ENCODE measurements at regions of chr2 and their contacts with region 1.

Region 1: DNA sequence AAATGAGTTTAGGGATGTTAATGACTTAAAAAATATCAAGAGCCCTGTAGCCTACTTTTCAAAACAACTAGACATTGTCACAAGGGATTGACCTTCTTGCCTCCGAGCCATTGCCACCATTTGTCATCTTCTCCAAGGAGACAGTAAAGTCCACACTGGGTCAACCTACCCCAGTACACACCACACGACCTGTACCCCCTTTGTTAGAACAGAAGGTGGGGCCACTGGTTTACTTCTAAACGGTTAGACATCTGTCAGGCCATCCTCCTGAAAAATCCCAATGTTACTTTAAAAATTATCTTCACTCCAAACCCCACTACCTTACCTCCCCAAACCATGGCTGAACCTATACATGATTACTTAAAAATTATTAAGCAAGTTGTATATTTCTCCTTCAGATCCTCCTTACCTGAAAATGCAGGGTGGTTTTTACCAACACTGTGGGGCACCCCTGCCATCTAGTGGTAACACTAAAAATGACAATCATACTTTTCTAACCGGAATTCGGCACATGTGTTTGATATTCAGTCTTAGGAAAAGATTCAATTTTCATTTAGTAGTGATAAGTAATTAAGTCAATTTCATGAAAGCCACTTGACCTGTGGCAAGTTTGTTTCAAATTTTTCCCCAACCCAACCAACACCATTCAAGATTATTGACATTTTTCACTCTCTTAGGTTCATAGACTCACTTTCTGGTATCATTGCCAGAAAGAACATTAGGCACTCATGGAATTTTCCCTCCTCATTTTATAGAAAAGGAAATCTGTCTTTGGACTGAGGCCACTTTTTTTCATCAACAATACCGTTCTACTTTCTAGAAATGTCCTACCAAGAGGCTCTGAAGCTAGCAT is 265.3 kb upstream of the PKDCC start:
- DNase-seq: peak; percentile 20
- CTCF ChIP-seq: peak; percentile 68

Region 2: DNA sequence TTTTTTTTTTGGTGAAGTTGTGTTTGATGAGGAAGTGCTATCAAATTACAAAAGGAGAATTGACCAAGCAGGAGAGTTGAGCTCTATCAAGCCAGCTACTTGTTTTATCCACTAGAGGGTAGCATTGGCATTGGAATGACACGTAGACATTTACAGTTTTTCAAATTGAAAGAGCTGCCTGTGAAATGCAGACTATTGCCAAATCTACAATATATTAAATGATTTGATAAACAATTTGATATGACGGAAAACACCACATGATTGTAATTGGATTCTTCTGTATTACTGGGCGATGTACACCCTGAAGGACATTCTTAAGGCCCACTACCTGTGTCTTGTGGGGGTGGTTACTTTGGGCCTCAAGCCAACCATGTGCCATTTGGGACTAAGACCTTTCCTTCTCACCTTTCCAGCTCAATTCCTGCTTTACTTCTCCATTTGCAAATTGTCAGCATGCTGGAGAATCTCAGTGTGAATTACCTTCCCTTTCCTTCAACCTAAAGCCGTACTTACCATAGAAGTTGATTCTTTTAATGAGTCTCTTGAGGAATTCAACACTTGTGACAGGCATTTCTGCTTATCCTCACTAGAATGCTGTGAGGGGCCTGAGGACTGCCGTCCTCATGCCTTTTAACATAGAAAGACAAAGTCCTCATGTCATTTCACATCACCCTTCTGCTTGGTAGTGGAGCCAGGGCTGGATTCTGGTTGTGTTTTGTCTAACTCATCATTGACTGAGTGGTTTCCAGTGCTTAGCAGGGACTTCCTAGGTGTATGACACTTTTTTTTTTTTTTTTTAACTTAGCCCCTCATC is 1868.7 kb before region 1 on chr2:
- in situ Hi-C with region 1: loop called (anchors 25 kb)
- DNase-seq: peak; percentile 46
- CTCF ChIP-seq: peak; percentile 87

Region 3: DNA sequence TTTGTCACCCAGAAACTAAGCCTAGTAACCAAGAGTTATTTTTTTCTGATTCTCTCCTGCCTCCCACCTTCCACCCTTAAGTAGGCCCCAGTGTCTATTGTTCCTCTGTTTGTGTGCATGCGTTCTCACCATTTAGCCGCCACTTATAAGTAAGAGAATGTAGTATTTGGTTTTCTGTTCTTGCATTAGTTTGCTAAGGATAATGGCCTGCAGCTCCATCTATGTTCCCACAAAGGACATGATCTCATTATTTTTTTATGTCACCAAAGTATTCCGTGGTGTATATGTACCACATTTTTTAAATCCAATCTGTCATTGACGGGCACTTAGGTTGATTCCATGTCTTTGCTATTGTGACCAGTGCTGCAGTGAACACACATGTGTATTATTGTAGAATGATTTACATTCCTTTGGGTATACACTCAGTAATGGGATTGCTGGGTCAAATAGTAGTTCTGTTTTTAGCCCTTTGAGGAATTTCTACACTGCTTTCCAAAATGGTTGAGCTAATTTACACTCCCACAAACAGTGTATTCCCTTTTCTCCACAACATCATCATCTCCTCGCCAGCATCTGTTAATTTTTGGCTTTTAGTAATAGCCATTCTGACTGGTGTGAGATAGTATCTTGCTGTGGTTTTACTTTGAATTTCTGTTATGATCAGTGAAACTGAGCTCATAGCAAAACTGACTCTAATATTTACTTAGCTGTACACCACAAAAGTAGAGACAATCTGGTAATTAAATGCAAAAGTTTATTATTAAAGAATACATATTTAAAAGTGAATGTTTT is 670.5 kb before region 1 on chr2:
- in situ Hi-C with region 1: no loop called
- DNase-seq: no peak
- CTCF ChIP-seq: no peak

Region 4: DNA sequence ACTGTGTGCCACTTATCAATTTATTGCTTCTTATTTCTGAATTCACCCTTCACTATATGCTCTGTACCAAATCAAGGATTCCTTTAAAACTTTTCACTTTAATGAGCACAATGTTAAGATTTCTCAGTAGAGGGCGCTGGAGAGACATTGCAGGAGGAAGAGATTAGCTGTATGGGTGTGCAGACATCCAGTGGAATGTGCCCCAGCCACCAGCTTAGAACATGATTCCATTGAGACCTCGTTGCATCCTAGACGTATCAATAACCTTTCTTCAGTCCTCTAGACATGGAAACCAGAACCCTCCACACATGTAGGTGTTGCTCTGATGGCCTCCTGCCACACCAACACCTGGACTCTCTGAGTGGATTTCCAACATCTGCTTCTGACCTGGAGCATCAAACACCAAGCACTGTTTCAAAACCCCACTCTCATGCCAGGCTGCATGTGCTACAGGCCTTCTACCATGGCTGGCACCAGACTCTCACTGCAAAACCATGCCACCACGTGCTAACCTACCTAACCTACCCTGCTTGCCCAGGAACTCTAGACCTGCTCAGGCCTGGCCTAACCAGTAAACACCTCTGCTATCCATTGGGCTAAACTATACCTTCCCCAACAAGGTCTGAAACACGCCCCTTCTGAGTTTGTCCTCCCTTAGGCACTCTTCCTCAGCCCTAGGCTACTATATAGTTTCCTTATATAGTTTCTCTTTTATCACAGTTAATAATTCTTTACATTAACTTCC is 367.9 kb before region 1 on chr2:
- in situ Hi-C with region 1: loop called (anchors 25 kb)
- DNase-seq: peak; percentile 3
- CTCF ChIP-seq: peak; percentile 65

Region 5: GRCh38 chr2:41922177-41922576 is 139.6 kb after region 1 on chr2:
- in situ Hi-C with region 1: no loop called
- DNase-seq: no peak
- CTCF ChIP-seq: no peak